Dendritic cell treated with granulocyte-macrophage colony-stimulating factor and Interleukin-4, amounts not matched to agents 40 ng/mL and 50 ng/mL, for 4 days (primary cell): ENCODE measurements at regions of chr21 and their contacts with region 1.

Region 1: GRCh38 chr21:46228345-46229051 is at the start of gene LSS:
- H3K4me3 Mint-ChIP-seq: peak within 1 kb of the TSS; percentile 85
- H3K27ac Mint-ChIP-seq: peak within 1 kb of the TSS; percentile 83
- H3K4me1 Mint-ChIP-seq: peaks cover 52% of the 10 kb centered on the region
- H3K27me3 Mint-ChIP-seq: peaks cover 2% of the 10 kb centered on the region

Region 2: DNA sequence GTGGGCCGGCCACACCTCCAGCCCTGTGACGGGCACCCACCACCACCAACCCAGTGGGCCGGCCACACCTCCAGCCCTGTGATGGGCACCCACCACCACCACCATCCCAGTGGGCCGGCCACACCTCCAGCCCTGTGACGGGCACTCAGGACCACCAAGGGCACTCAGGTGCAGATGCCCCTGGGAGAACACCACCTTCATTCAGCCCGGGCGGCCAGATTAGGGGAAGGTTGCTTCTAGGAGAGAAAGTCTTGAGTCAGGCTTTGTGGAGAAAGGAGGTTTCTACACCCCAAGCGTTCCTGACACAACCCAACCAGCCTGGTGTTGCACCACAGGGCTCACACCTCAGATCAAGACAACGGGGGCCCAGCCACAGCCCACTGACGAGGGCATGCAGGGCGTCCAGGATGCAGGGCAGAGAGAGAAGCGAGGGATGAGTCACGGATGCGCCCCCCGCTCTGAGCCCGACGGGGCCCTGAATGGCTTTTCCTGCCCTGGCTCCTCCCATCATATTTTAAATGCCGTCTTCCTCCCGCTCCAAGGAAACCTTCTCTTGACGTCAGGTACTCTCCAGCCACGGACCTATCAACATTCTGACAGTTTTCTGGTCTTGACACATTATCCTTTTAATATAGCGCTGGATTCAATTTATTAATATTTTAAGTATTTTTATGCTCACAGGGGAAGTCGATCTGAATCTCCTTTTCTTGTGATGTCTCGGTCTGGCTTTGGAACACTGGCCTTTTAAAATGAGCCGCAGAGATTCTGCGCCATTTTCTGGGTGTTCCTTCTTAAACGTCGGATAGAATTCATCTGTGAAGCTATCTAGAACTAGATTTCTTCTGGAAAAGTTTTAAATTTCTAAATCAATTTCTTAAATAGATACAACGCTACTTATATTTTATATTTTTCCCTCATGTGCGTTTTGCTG is 43.6 kb before region 1 on chr21:
- intact Hi-C with region 1: loop called (anchors 2 kb)
- H3K4me3 Mint-ChIP-seq: peak overlapping the region; percentile 91
- H3K27ac Mint-ChIP-seq: peak overlapping the region; percentile 79
- H3K4me1 Mint-ChIP-seq: peaks cover 28% of the 10 kb centered on the region
- H3K27me3 Mint-ChIP-seq: no peaks in the 10 kb centered on the region

Region 3: GRCh38 chr21:46285761-46286496 is 57.4 kb after region 1 on chr21 and contains the start of gene YBEY:
- intact Hi-C with region 1: loop called (anchors 1 kb)
- H3K4me3 Mint-ChIP-seq: peak within 1 kb of the TSS; percentile 95
- H3K27ac Mint-ChIP-seq: peak within 1 kb of the TSS; percentile 98
- H3K4me1 Mint-ChIP-seq: peaks cover 70% of the 10 kb centered on the region
- H3K27me3 Mint-ChIP-seq: no peaks in the 10 kb centered on the region

Region 4: DNA sequence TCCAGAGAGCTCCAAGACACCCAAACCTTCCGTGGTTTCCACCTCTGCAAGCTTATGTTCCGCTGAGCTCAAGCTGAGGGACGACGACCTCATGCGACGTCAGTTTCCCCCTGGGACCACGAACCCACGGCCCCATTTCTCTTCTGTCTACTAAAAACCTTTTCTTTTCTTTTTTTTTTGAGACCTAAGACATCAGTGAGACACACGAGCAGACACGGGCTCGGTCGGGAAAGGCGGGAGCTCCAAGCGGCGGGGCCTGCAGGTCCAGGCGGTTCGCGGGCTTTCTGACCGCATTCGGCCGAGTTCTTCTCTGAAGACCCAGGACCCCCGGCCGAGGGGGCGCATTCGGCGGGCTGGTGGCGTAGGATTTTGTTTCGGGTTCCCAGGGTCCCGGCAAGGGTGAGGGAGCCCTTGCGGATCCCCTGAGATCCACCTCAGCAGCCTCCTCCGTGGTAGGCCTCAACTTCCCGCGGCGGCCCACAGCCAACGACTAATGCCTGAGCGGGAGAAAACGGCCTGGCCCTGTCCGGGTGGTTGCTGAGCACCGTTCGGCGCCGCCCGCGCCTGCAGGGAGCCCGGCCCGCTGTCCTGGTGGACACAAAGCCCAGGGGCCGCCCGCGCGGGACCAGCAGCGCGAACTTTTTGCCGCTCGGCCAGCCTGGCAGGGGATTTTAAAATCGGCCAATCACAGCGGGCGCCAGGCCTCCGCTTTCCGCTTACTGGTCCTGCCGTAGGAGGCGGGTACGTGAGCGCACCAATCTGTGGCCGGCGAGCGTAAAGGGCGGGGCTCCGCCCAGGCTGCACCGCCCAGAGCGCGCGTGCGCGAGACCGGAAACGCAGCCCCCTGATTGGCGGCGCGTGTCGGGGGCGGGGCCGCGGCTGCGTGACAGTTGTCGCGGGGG is 95.0 kb after region 1 on chr21 and contains the start of gene C21orf58:
- intact Hi-C with region 1: loop called (anchors 2 kb)
- H3K4me3 Mint-ChIP-seq: peak within 1 kb of the TSS; percentile 98
- H3K27ac Mint-ChIP-seq: peak within 1 kb of the TSS; percentile 98
- H3K4me1 Mint-ChIP-seq: peaks cover 45% of the 10 kb centered on the region
- H3K27me3 Mint-ChIP-seq: no peaks in the 10 kb centered on the region

Region 5: GRCh38 chr21:46361935-46362334 is 133.4 kb after region 1 on chr21:
- intact Hi-C with region 1: no loop called
- H3K4me3 Mint-ChIP-seq: no peak overlapping the region
- H3K27ac Mint-ChIP-seq: no peak overlapping the region
- H3K4me1 Mint-ChIP-seq: no peaks in the 10 kb centered on the region
- H3K27me3 Mint-ChIP-seq: no peaks in the 10 kb centered on the region